Activated CD8-positive, alpha-beta T cell treated with anti-CD3 and anti-CD28 coated beads for 36 hours (primary cell): ENCODE measurements at regions of chr10 and their contacts with region 1.

Region 1: GRCh38 chr10:11757821-11758463 is 15.8 kb downstream of the ECHDC3 start:
- DNase-seq: peak; percentile 92
- ATAC-seq: peak; percentile 100
- H3K4me3 Mint-ChIP-seq: no peak overlapping the region
- H3K27ac Mint-ChIP-seq: no peak overlapping the region
- H3K4me1 Mint-ChIP-seq: peaks cover 4% of the 10 kb centered on the region
- H3K27me3 Mint-ChIP-seq: no peaks in the 10 kb centered on the region
- CTCF ChIP-seq: peak; percentile 90

Region 2: DNA sequence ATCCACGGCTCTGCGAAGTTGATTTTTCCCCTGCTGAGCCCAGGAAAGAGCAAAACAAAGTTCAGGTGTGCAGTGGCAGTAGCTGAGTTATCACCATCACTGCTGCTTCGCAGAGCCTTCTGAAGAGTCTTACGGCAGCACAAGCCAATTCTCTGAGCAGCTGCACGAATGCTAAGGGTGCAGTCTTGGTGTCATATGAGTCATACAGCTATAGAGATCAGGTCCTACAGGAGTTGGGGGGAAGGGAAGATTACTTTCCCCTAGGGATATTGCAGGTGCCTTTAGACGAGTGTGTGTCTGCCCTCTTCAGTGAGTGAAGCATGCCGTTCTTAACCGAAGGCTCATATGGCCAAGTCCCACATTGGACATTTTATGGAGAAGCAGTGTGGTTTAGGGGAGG is 512.4 kb before region 1 on chr10:
- CTCF ChIA-PET with region 1: no interaction called
- POLR2A ChIA-PET with region 1: no interaction called
- intact Hi-C with region 1: no loop called
- DNase-seq: peak; percentile 52
- ATAC-seq: peak; percentile 60
- H3K4me3 Mint-ChIP-seq: no peak overlapping the region
- H3K27ac Mint-ChIP-seq: no peak overlapping the region
- H3K4me1 Mint-ChIP-seq: peaks cover 58% of the 10 kb centered on the region
- H3K27me3 Mint-ChIP-seq: no peaks in the 10 kb centered on the region
- CTCF ChIP-seq: no peak

Region 3: GRCh38 chr10:11505639-11506038 is 252.3 kb before region 1 on chr10:
- CTCF ChIA-PET with region 1: interaction called, 12 read pairs
- POLR2A ChIA-PET with region 1: interaction called, 3 read pairs
- intact Hi-C with region 1: no loop called
- DNase-seq: peak; percentile 18
- ATAC-seq: no peak
- H3K4me3 Mint-ChIP-seq: no peak overlapping the region
- H3K27ac Mint-ChIP-seq: peak overlapping the region; percentile 9
- H3K4me1 Mint-ChIP-seq: peaks cover 10% of the 10 kb centered on the region
- H3K27me3 Mint-ChIP-seq: no peaks in the 10 kb centered on the region
- CTCF ChIP-seq: no peak

Region 4: DNA sequence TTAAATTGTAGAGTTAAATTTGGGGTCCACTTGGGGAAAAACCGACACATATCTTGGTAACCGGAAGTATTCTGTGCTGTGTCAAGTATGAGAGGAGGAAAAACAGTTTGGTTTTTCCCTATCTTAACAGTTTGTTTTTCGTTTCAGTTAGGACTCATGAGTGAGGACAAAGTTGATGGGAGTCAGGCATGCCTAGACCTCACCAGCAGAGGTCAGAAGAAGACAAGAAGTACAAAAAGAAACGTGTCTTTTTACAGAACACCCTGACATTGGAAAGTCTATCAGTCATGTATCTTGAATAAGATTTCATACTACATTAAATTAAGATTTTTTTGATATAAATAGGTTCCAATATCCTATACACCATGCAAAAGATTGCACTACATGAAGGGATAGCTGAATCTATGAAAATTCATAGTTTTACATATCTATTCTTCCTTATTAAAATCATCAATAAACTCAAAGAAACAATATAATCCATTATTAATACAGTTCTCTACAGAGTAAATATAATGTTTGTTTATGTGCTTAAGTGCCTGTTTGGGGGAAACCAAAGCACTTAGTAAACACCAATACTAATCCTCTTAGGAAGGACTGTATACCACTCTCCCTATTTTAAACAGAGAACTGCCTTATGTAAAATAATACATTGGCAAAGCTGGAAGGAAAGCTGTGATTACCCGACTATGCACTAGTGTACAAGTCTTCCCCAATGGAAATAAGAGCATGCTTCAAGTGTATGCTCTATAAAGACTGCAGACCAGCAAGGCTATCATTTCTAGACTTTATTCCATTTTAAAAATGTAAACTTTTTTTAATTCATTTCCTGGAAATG is 242.1 kb before region 1 on chr10:
- CTCF ChIA-PET with region 1: interaction called, 137 read pairs
- POLR2A ChIA-PET with region 1: interaction called, 3 read pairs
- intact Hi-C with region 1: loop called (anchors 1 kb)
- DNase-seq: peak; percentile 71
- ATAC-seq: peak; percentile 82
- H3K4me3 Mint-ChIP-seq: no peak overlapping the region
- H3K27ac Mint-ChIP-seq: peak overlapping the region; percentile 6
- H3K4me1 Mint-ChIP-seq: peaks cover 20% of the 10 kb centered on the region
- H3K27me3 Mint-ChIP-seq: no peaks in the 10 kb centered on the region
- CTCF ChIP-seq: peak; percentile 88

Region 5: GRCh38 chr10:11522821-11523245 is 235.1 kb before region 1 on chr10:
- CTCF ChIA-PET with region 1: interaction called, 27 read pairs
- POLR2A ChIA-PET with region 1: interaction called, 3 read pairs
- intact Hi-C with region 1: no loop called
- DNase-seq: no peak
- ATAC-seq: no peak
- H3K4me3 Mint-ChIP-seq: no peak overlapping the region
- H3K27ac Mint-ChIP-seq: no peak overlapping the region
- H3K4me1 Mint-ChIP-seq: peaks cover 7% of the 10 kb centered on the region
- H3K27me3 Mint-ChIP-seq: no peaks in the 10 kb centered on the region
- CTCF ChIP-seq: no peak

Region 6: DNA sequence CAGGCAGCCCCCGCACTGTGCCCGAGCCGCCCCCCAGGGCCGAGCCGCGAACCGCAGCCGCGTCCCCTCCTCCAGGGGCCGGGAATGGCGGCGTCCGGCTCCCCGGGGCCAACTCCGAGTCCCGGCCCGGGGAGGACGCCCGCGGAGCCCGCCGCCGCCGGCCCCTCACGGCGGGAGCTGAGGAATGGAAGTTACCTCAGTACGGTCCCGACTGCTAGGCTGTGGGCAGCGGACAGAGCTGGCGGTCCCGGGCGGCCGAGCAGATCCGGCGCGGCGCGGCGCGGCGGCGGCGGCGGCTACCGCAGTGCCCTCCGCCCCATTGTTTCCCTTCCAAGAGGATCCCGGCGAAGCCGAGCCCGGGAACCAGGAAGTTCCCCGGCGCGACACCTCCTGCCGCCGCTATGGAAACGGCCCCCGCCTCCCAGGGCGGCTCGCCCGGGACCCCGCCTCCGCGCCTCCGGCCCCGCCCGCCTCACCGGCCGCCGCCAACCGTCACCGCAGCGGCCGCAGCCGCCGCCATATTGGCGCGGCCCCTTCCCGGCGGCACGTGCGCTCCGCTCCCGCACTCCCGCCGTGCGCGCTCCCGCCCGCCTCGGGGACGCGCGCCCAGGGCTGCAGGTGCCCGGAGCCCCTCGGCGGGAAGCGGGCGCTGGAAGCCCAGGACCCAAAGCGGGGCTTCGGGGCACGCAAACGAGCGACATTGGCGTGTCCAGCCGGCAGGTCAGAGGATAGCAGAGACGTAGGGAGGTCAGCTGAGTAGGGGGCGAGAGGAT is 146.5 kb before region 1 on chr10 and contains the start of gene USP6NL:
- CTCF ChIA-PET with region 1: interaction called, 12 read pairs
- POLR2A ChIA-PET with region 1: no interaction called
- intact Hi-C with region 1: no loop called
- DNase-seq: peak; percentile 47
- ATAC-seq: peak; percentile 42
- H3K4me3 Mint-ChIP-seq: peak within 1 kb of the TSS; percentile 82
- H3K27ac Mint-ChIP-seq: peak within 1 kb of the TSS; percentile 78
- H3K4me1 Mint-ChIP-seq: peaks cover 42% of the 10 kb centered on the region
- H3K27me3 Mint-ChIP-seq: peaks cover 4% of the 10 kb centered on the region
- CTCF ChIP-seq: no peak
- total RNA-seq, gene USP6NL: 2.3 to 2.5 TPM

Region 7: GRCh38 chr10:11698691-11699549 is 59.0 kb before region 1 on chr10:
- CTCF ChIA-PET with region 1: no interaction called
- POLR2A ChIA-PET with region 1: no interaction called
- intact Hi-C with region 1: loop called (anchors 2 kb)
- DNase-seq: no peak
- ATAC-seq: peak; percentile 53
- H3K4me3 Mint-ChIP-seq: no peak overlapping the region
- H3K27ac Mint-ChIP-seq: no peak overlapping the region
- H3K4me1 Mint-ChIP-seq: peaks cover 10% of the 10 kb centered on the region
- H3K27me3 Mint-ChIP-seq: peaks cover 7% of the 10 kb centered on the region
- CTCF ChIP-seq: no peak

Region 8: GRCh38 chr10:11742005-11742778 is 15.8 kb before region 1 on chr10 and contains the start of gene ECHDC3:
- CTCF ChIA-PET with region 1: interaction called, 18 read pairs
- POLR2A ChIA-PET with region 1: interaction called, 3 read pairs
- intact Hi-C with region 1: no loop called
- DNase-seq: peak; percentile 48
- ATAC-seq: peak; percentile 93
- H3K4me3 Mint-ChIP-seq: peak within 1 kb of the TSS; percentile 56
- H3K27ac Mint-ChIP-seq: no peak within 1 kb of the TSS
- H3K4me1 Mint-ChIP-seq: peaks cover 7% of the 10 kb centered on the region
- H3K27me3 Mint-ChIP-seq: peaks cover 18% of the 10 kb centered on the region
- CTCF ChIP-seq: no peak
- total RNA-seq, gene ECHDC3: 1.1 to 1.7 TPM

Region 9: GRCh38 chr10:11863353-11864109 is 105.6 kb after region 1 on chr10:
- CTCF ChIA-PET with region 1: no interaction called
- POLR2A ChIA-PET with region 1: no interaction called
- intact Hi-C with region 1: no loop called
- DNase-seq: peak; percentile 75
- ATAC-seq: peak; percentile 93
- H3K4me3 Mint-ChIP-seq: no peak overlapping the region
- H3K27ac Mint-ChIP-seq: peak overlapping the region; percentile 13
- H3K4me1 Mint-ChIP-seq: peaks cover 19% of the 10 kb centered on the region
- H3K27me3 Mint-ChIP-seq: peaks cover 2% of the 10 kb centered on the region
- CTCF ChIP-seq: no peak